Transverse colon (tissue), 4 donors: ENCODE measurements at regions of chr18 and their contacts with region 1.

Region 1: GRCh38 chr18:22627526-22627925 is 209.8 kb upstream of the CTAGE1 start:
- DNase-seq: no peak
- H3K4me3 ChIP-seq: no peak overlapping the region
- H3K27ac ChIP-seq: no peak overlapping the region
- H3K4me1 ChIP-seq: peaks cover 0 to 9% (median 7%) of the 10 kb centered on the region in 4 donors
- H3K27me3 ChIP-seq: no peaks in the 10 kb centered on the region
- CTCF ChIP-seq: no peak
- EP300 ChIP-seq: no peak
- POLR2A ChIP-seq: no peak

Region 2: DNA sequence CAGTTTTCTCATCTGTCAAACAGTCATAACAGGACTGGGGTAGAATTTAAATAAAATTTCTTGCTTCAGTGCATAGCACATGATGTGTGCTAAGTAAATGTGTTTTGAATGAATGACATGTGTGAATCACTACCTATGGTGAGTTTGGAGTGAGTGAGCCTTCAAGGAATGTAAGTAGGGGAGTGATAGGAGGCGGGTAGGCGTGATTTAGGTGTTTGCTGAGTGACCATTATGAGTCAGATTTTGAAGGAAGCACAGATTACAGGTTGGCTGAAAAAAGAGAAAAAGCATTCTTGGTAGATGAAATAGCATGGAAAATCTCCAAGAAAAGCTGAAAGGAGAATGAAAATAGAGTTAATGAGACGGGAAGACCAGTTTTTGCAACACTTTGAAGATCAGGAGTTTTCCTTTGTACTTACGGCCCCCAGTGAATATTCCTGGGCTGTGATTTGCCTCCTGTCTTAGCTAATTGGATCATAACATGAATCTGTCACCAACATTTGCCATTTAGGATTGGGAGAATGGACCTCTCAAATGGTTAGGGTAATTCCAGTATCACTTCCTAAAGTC is 595.0 kb before region 1 on chr18:
- in situ Hi-C with region 1: no loop called
- intact Hi-C with region 1: no loop called
- DNase-seq: peak; percentile 20
- H3K4me3 ChIP-seq: no peak overlapping the region
- H3K27ac ChIP-seq: no peak overlapping the region
- H3K4me1 ChIP-seq: peaks cover 0 to 10% (median 5%) of the 10 kb centered on the region in 4 donors
- H3K27me3 ChIP-seq: no peaks in the 10 kb centered on the region
- CTCF ChIP-seq: no peak
- EP300 ChIP-seq: no peak
- POLR2A ChIP-seq: no peak

Region 3: DNA sequence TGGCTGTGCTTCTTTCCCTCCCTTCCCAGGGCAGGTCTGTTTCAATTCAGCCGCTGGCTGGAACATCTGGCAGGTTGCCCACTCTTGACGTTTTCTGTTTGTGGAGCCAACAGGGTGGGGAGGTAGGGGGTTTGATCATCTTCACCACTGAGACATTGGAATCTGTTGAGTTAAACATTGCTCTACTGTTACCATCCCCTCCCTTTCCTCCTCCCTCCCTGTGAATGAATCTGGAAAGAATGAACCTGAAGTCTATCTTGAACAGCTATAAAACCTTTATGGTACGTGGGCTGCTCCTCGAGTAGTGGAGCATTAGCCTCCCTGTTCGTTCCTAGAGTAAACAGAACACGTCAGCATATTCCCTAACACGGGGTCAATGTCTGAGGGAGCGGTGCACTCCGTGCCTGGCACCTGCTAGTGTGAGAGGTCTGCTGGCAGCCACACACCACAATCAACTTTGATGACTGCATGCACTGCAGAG is 55.7 kb after region 1 on chr18:
- in situ Hi-C with region 1: loop called in 1 of 4 experiments (anchors 10 kb)
- intact Hi-C with region 1: no loop called
- DNase-seq: peak; percentile 95
- H3K4me3 ChIP-seq: no peak overlapping the region
- H3K27ac ChIP-seq: peak overlapping the region; percentile 81 to 84 (median 82)
- H3K4me1 ChIP-seq: peaks cover 13 to 59% (median 32%) of the 10 kb centered on the region in 4 donors
- H3K27me3 ChIP-seq: no peaks in the 10 kb centered on the region
- CTCF ChIP-seq: peak in 1 of 5 experiments; percentile 3
- EP300 ChIP-seq: peak; percentile 86
- POLR2A ChIP-seq: no peak